AG04449 (cell line): ENCODE measurements at regions of chr16 and their contacts with region 1.

Region 1: GRCh38 chr16:57863434-57864160 is 61.3 kb upstream of the KIFC3 start:
- DNase-seq: peak; percentile 44
- H3K4me3 ChIP-seq: no peak overlapping the region
- CTCF ChIP-seq: peak; percentile 68

Region 2: DNA sequence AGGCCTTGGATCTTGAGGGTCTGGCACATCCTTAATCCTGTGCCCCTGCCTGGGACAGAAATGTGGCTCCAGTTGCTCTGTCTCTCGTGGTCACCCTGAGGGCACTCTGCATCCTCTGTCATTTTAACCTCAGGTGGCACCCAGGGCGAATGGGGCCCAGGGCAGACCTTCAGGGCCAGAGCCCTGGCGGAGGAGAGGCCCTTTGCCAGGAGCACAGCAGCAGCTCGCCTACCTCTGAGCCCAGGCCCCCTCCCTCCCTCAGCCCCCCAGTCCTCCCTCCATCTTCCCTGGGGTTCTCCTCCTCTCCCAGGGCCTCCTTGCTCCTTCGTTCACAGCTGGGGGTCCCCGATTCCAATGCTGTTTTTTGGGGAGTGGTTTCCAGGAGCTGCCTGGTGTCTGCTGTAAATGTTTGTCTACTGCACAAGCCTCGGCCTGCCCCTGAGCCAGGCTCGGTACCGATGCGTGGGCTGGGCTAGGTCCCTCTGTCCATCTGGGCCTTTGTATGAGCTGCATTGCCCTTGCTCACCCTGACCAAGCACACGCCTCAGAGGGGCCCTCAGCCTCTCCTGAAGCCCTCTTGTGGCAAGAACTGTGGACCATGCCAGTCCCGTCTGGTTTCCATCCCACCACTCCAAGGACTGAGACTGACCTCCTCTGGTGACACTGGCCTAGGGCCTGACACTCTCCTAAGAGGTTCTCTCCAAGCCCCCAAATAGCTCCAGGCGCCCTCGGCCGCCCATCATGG is 199.5 kb before region 1 on chr16:
- CTCF ChIA-PET with region 1: no interaction called
- POLR2A ChIA-PET with region 1: no interaction called
- DNase-seq: no peak
- H3K4me3 ChIP-seq: no peak overlapping the region
- CTCF ChIP-seq: peak; percentile 1

Region 3: DNA sequence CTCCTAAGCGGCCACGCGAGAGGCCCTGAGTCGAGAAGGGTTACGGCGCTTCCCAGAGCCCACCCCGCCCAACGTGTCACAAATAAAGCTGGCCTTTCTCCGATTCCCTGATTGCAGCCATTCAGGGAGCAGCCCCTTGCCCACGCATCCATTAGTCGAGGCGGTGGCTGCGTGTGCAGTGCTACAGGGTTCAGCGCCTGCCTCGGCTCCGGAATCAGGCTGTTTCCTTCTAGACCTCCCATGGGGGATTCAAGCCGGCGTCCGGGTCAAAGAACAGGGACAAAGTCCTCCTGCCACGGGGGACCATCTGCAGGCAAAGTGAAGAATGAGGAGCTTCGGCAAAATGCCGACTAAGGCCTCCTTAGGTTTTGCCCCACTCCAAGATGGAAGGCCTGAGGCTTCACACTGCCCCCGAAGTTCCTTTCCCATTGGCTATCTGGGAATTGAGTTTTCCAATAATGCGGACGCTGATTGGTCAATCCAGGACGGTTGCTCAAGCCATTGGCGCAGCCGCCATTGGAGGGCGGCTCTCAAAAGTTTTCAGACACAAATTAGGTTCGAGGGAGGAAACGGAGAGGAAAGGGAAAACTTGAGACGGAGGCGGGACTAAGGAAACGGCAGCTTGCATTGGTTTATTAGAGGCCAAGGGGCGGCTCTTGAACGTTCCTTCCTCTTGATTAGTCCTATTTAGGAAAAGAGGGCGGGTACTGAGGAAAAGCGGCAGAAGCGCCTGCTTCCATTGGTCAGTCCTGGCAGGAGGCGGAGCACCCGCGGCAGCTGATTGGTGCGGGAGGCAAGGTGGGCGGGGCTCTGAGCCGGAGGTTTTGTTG is 128.5 kb before region 1 on chr16:
- CTCF ChIA-PET with region 1: interaction called, 30 read pairs
- POLR2A ChIA-PET with region 1: interaction called, 4 read pairs
- DNase-seq: peak; percentile 100
- H3K4me3 ChIP-seq: peak overlapping the region; percentile 96
- CTCF ChIP-seq: no peak

Region 4: DNA sequence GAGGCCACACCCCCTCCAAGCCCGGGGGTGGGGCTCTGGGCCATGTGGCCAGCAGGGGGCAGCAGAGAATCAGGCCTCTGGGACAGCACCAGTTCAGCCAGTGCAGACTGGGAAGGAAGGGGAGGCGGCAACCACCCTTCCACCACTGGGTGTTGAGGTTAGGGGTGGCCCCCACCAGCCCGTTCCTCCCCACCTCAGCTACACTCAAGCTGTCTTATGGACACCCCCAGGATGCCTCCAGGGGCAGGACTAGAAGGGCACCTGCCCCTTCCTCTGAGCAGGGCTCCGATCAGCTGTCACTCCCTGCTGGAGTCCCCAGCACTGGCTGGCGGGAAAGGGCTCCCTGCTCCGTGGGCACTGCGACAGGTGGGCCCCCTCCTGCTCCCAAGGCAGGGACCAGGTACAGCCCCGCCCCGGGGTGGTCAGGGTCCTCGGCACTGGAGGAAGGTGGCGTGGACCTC is 106.2 kb before region 1 on chr16:
- CTCF ChIA-PET with region 1: interaction called, 122 read pairs
- POLR2A ChIA-PET with region 1: no interaction called
- DNase-seq: peak; percentile 17
- H3K4me3 ChIP-seq: no peak overlapping the region
- CTCF ChIP-seq: peak; percentile 96

Region 5: DNA sequence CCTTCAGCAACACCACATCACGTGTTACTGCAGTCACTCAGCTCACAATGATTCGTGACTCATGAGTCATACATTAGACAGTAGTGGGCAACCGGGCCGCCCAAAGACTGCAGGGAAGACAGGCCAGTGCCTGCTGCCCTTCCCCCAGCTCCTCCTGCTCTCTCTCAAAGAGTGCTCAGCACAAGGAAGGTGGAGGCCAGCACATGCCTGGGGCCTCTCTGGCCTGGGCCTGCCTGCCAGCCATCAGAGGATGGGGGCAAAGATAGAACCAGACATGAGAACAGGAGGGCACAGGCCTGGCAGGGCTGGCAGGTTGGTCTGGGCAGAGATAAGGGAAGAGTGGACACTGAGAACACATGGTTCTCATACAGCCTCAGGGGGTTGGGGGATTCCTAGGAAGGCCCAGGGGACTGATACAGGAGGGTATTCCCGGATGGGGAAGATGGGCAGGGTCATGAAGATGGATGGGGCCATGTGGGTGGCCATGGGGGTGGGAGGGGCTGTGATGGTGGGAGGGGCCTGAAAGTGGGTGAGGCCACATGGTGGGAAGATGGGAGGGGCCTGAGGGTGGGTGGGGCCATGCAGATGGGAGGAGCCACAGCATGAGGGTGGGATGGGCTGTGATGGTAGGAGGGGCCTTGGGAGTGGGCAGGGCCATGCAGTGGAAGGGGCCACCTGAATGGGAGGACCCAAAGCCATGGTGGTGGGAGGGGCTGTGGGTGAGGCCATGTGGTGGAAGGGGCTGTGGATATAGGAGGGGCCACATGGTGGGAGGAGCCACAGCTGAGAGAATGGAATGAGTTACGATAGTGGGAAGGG is 99.0 kb before region 1 on chr16:
- CTCF ChIA-PET with region 1: interaction called, 122 read pairs
- POLR2A ChIA-PET with region 1: no interaction called
- DNase-seq: peak; percentile 33
- H3K4me3 ChIP-seq: no peak overlapping the region
- CTCF ChIP-seq: no peak

Region 6: GRCh38 chr16:57795431-57795878 is 68.1 kb before region 1 on chr16:
- CTCF ChIA-PET with region 1: interaction called, 36 read pairs
- POLR2A ChIA-PET with region 1: no interaction called
- DNase-seq: no peak
- H3K4me3 ChIP-seq: no peak overlapping the region
- CTCF ChIP-seq: peak; percentile 51

Region 7: DNA sequence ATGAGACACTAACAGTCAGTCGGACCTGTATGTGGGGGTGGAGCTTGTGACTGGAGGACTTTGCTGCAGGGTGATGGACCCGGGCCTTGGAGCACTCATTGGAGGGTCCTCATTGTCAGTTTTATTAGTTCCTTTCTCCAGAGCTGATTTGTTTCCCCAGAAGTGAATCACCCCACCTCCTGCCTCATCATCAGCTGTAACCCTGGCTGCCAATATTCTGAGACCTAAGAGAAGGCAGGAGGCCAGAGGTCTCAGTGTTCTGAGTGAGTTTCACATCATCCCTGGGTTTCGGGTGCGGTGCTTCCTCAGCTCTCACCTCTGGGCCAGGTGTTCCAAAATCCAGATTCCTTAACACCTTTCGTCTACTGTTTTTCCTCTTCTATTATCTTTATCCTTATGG is 11.4 kb before region 1 on chr16:
- CTCF ChIA-PET with region 1: interaction called, 15 read pairs
- POLR2A ChIA-PET with region 1: no interaction called
- DNase-seq: no peak
- H3K4me3 ChIP-seq: no peak overlapping the region
- CTCF ChIP-seq: no peak